Activated CD8-positive, alpha-beta memory T cell treated with anti-CD3 and anti-CD28 coated beads, Interleukin-2, amount 10 ng/mL, durations not matched to agents 7 days and 5 days (primary cell): ENCODE measurements at regions of chr1 and their contacts with region 1.

Region 1: GRCh38 chr1:39098546-39099250 is 72.5 kb downstream of the NDUFS5 start:
- DNase-seq: peak; percentile 78
- ATAC-seq: peak; percentile 89
- H3K4me3 Mint-ChIP-seq: no peak overlapping the region
- H3K27ac Mint-ChIP-seq: no peak overlapping the region
- H3K4me1 Mint-ChIP-seq: peaks cover 22% of the 10 kb centered on the region
- H3K27me3 Mint-ChIP-seq: no peaks in the 10 kb centered on the region

Region 2: DNA sequence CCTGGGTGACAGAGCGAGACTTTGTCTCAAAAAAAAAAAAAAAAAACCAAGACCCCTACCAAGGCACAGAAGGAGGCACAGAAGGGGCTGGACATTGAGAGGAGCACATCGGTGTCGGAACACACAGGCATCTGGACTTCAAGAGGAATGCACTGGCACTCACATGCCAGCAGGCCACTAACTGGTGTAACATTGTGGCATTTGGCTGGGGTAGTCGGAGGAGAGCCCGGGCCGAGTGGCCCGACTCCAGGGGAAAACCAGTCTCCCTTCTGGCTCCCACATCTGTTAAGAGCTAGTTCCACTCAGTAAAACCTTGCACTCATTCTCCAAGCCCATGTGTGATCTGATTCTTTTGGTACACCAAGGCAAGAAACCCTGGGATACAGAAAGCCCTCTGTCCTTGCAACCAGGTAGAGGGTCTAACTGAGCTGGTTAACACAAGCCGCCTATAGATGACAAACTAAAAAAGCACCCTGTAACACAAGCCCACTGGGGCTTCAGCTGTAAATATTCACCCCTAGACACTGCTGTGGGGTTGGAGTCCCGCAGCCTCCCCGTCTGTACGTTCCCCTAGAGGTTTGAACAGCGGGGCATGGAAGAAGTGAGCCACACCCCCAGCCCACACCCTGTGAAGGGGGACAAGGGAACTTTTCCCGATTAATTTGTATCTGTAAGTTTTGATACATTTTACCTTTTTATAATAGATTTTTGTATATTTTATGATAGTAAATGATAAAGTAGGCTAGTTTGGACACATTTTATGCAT is 124.9 kb before region 1 on chr1:
- CTCF ChIA-PET with region 1: no interaction called
- DNase-seq: no peak
- ATAC-seq: no peak
- H3K4me3 Mint-ChIP-seq: no peak overlapping the region
- H3K27ac Mint-ChIP-seq: no peak overlapping the region
- H3K4me1 Mint-ChIP-seq: peaks cover 9% of the 10 kb centered on the region
- H3K27me3 Mint-ChIP-seq: no peaks in the 10 kb centered on the region

Region 3: DNA sequence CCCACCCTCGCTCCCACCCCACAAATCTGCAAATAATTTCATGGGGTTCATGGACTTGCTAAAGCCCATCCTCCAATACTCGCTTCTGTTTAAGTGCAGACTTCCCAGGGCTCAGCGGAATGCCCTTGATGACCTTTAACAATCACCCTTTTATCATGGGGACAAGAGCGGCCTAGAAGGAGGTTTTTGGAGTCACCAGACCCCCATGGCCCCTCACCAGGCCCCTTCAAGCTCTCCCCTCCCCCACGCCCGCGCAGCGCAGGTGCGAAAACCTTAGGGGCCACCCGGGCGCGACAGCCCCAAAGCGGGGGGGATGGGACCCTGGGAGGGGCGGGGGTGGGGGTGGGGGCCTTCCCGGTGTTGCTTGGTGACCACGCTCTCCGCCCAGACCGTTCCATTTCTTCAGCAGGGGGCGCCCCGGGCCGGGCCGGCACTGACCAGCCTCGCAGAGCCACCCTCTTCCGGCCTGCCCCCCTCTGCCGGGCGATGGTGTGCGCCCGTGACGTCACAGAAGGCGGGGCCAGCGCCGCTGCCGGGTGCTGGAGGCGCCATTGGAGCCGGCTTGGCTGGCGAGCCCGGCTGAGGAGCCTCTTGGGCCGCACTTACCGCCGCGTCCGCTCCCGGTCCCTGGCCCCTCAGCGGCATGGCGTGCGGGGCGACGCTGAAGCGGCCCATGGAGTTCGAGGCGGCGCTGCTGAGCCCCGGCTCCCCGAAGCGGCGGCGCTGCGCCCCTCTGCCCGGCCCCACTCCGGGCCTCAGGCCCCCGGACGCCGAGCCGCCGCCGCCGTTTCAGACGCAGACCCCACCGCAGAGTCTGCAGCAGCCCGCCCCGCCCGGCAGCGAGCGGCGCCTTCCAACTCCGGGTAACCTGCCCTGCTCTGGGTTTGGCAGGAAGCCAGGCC is 107.7 kb before region 1 on chr1 and contains the start of gene AKIRIN1:
- CTCF ChIA-PET with region 1: no interaction called
- DNase-seq: peak; percentile 97
- ATAC-seq: peak; percentile 94
- H3K4me3 Mint-ChIP-seq: peak within 1 kb of the TSS; percentile 78
- H3K27ac Mint-ChIP-seq: peak within 1 kb of the TSS; percentile 81
- H3K4me1 Mint-ChIP-seq: peaks cover 41% of the 10 kb centered on the region
- H3K27me3 Mint-ChIP-seq: no peaks in the 10 kb centered on the region
- total RNA-seq, gene AKIRIN1: 47.0 to 59.1 TPM

Region 4: GRCh38 chr1:39026051-39026865 is 72.4 kb before region 1 on chr1 and contains the start of gene NDUFS5:
- CTCF ChIA-PET with region 1: no interaction called
- DNase-seq: peak; percentile 91
- ATAC-seq: peak; percentile 91
- H3K4me3 Mint-ChIP-seq: peak within 1 kb of the TSS; percentile 93
- H3K27ac Mint-ChIP-seq: peak within 1 kb of the TSS; percentile 96
- H3K4me1 Mint-ChIP-seq: peaks cover 29% of the 10 kb centered on the region
- H3K27me3 Mint-ChIP-seq: no peaks in the 10 kb centered on the region
- total RNA-seq, gene NDUFS5: 122 to 142 TPM

Region 5: DNA sequence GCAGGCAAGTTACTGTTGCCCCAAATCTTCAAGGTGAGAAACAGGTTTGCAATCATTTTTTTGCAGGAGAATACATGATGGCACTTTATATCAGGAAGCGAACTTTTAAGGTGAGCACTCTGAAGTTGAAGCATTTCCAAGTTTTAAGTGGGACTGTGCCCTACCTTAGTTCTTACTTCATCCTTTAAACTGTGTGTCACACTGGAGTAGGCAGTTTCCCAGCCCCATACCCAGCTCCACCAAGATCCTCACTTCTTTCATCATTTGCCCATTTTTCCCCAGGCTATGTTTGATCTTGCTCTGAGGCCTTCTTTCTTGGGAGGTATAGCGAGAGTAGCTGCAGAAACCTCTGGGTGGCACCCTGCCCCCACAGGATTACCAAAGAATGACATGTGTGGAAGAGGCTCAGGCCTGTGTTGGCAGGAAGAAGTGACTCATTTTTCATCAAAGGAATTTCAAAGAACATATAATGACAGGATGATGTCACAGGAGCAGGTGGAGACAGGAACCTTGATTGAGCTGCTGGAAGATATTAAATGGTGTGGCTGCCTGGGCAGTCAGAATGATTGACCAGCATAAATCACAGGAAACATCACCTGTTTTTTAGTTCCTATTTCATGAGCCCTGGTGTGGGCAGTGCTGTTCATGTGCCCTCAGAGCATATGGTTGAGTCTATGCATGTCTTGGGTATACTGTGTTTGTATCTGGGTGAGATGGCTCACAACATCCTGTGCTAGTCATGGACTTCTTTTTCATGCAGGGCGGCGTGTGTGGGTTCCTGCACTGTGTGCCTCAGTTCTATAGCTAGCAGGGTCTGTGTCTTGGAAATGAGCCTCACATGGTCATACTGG is 85.0 kb after region 1 on chr1:
- CTCF ChIA-PET with region 1: interaction called, 72 read pairs
- DNase-seq: peak; percentile 85
- ATAC-seq: peak; percentile 84
- H3K4me3 Mint-ChIP-seq: no peak overlapping the region
- H3K27ac Mint-ChIP-seq: peak overlapping the region; percentile 71
- H3K4me1 Mint-ChIP-seq: peaks cover 46% of the 10 kb centered on the region
- H3K27me3 Mint-ChIP-seq: no peaks in the 10 kb centered on the region

Region 6: GRCh38 chr1:39189592-39190041 is 90.9 kb after region 1 on chr1:
- CTCF ChIA-PET with region 1: interaction called, 72 read pairs
- DNase-seq: no peak
- ATAC-seq: no peak
- H3K4me3 Mint-ChIP-seq: no peak overlapping the region
- H3K27ac Mint-ChIP-seq: peak overlapping the region; percentile 64
- H3K4me1 Mint-ChIP-seq: peaks cover 81% of the 10 kb centered on the region
- H3K27me3 Mint-ChIP-seq: no peaks in the 10 kb centered on the region

Region 7: DNA sequence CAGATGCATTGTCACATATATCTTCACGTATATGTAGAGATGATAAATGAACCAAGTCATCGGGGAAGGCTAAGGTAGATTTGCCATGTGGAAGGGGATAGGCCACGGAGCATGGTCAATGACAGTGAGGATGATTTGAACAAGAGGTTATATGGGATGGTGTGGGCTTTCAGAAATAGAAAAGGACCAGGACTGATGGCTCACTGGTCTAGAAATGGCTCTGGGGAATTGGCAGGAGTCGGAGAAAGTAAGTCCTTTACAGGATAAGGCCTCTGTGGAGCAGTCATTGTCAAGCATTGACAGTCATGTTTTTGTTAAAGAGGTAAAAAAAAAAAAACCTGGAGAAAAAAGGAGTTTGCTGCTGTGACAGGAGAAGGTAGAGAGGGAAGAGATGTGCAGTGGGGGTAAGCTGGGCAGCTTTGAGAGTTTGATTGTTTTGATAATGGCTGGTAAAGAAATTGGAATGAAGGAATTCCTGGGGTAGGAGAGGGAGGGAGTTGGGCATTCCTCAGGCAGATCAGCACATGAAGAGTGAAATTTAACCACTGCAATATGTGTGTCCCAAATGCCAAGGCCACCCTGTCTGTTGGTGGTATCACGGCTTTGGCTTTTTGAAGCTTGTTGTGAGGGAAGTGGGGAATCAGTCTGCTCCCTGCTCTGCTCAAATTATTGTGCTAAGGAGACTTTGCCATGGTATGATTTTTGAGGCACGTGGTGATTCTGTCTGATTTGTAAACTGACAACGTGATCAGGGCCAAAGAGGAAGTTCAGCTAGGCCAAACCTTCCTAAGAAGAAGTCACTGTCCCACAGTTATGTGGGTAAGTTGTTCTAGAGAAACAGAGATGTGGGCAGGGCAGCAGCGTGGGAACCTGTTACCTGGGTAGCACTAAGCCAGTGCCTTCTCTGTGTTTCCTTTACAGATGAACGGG is 131.8 kb after region 1 on chr1:
- CTCF ChIA-PET with region 1: no interaction called
- DNase-seq: peak; percentile 44
- ATAC-seq: peak; percentile 53
- H3K4me3 Mint-ChIP-seq: no peak overlapping the region
- H3K27ac Mint-ChIP-seq: peak overlapping the region; percentile 60
- H3K4me1 Mint-ChIP-seq: peaks cover 39% of the 10 kb centered on the region
- H3K27me3 Mint-ChIP-seq: no peaks in the 10 kb centered on the region

Region 8: GRCh38 chr1:39408641-39409054 is 309.9 kb after region 1 on chr1:
- CTCF ChIA-PET with region 1: interaction called, 10 read pairs
- DNase-seq: peak; percentile 87
- ATAC-seq: peak; percentile 93
- H3K4me3 Mint-ChIP-seq: peak overlapping the region; percentile 75
- H3K27ac Mint-ChIP-seq: no peak overlapping the region
- H3K4me1 Mint-ChIP-seq: peaks cover 59% of the 10 kb centered on the region
- H3K27me3 Mint-ChIP-seq: no peaks in the 10 kb centered on the region

Region 9: GRCh38 chr1:39538588-39539465 is 440.1 kb after region 1 on chr1:
- CTCF ChIA-PET with region 1: interaction called, 20 read pairs
- DNase-seq: peak; percentile 67
- ATAC-seq: peak; percentile 96
- H3K4me3 Mint-ChIP-seq: no peak overlapping the region
- H3K27ac Mint-ChIP-seq: no peak overlapping the region
- H3K4me1 Mint-ChIP-seq: peaks cover 1% of the 10 kb centered on the region
- H3K27me3 Mint-ChIP-seq: no peaks in the 10 kb centered on the region